Heart left ventricle (tissue), 16 donors: ENCODE measurements at regions of chr5 and their contacts with region 1.

Region 1: DNA sequence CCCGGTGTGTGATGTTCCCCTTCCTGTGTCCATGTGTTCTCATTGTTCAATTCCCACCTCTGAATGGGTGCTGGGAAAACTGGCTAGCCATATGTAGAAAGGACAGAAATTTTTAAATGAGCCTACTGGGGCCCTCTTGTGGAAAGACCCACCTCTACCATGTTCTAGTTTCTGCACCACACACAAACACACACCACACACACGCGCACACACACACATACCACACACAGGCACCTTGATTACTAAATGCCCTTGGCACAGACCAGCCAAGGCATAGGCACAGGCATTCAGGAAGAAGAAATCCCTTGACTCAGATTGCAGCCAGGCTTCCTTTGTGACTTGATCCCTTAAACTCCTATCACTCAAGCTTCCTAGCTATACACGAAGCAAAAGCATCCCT is 60.5 kb downstream of the SIL1 start:
- DNase-seq: no peak
- ATAC-seq: peak; percentile 11 to 47 (median 22)
- H3K4me3 ChIP-seq: no peak overlapping the region
- H3K27ac ChIP-seq: peak overlapping the region in 4 of 12 donors; percentile 70 to 77 (median 72)
- H3K4me1 ChIP-seq: peaks cover 17 to 67% (median 55%) of the 10 kb centered on the region in 12 donors
- H3K27me3 ChIP-seq: no peaks in the 10 kb centered on the region
- CTCF ChIP-seq: peak in 7 of 12 donors; percentile 12 to 39 (median 26)
- POLR2A ChIP-seq: no peak

Region 2: GRCh38 chr5:139104577-139105276 is 33.0 kb before region 1 on chr5:
- intact Hi-C with region 1: loop called in 1 of 10 experiments (anchors 5 kb)
- DNase-seq: peak in 4 of 5 donors; percentile 64 to 70 (median 66)
- ATAC-seq: peak; percentile 57 to 95 (median 94)
- H3K4me3 ChIP-seq: peak overlapping the region in 2 of 12 donors; percentile 11 to 23
- H3K27ac ChIP-seq: peak overlapping the region in 9 of 12 donors; percentile 6 to 83 (median 46)
- H3K4me1 ChIP-seq: peaks cover 0 to 41% (median 11%) of the 10 kb centered on the region in 12 donors
- H3K27me3 ChIP-seq: no peaks in the 10 kb centered on the region
- CTCF ChIP-seq: no peak
- POLR2A ChIP-seq: no peak

Region 3: DNA sequence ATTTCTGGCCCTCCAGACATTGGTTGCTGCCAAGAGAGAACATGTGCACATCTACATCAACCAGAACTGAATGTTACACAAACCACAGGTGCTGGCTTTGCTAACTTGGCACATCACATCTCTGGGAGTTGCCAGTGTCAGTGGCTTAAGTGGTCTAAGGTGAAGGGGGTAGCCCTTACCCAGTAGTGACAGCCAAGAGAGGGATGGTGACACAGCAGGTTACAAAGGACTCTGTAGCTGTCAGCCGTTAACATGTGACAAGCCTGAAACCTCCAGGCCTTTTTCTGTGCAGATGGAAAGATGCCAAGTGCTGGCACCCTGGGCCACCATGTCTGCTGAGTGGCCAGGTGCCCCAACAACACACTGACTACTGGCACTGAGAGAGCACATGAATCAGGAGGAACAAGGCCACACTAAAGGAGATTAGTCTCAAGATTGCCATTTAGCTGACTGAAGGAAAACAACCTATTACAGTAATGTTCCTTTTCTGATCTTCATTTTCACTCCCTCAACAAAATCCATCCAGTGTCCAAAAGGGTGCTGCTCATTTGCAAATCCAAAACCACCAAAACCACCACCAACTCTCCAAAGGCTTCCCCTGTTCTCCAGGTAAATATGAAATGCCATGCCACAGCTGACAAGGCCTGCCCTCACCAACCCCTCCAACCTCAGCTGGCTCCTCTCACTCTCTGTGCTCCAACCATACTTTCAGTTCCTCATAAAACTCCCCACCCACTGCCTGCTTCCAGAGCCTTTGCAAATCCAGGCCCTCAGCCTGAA is 40.3 kb after region 1 on chr5:
- intact Hi-C with region 1: loop called in 1 of 10 experiments (anchors 5 kb)
- DNase-seq: peak; percentile 55 to 78 (median 71)
- ATAC-seq: peak; percentile 93 to 97 (median 96)
- H3K4me3 ChIP-seq: no peak overlapping the region
- H3K27ac ChIP-seq: peak overlapping the region; percentile 10 to 85 (median 76)
- H3K4me1 ChIP-seq: peaks cover 0 to 60% (median 43%) of the 10 kb centered on the region in 12 donors
- H3K27me3 ChIP-seq: no peaks in the 10 kb centered on the region
- CTCF ChIP-seq: no peak
- POLR2A ChIP-seq: no peak

Region 4: DNA sequence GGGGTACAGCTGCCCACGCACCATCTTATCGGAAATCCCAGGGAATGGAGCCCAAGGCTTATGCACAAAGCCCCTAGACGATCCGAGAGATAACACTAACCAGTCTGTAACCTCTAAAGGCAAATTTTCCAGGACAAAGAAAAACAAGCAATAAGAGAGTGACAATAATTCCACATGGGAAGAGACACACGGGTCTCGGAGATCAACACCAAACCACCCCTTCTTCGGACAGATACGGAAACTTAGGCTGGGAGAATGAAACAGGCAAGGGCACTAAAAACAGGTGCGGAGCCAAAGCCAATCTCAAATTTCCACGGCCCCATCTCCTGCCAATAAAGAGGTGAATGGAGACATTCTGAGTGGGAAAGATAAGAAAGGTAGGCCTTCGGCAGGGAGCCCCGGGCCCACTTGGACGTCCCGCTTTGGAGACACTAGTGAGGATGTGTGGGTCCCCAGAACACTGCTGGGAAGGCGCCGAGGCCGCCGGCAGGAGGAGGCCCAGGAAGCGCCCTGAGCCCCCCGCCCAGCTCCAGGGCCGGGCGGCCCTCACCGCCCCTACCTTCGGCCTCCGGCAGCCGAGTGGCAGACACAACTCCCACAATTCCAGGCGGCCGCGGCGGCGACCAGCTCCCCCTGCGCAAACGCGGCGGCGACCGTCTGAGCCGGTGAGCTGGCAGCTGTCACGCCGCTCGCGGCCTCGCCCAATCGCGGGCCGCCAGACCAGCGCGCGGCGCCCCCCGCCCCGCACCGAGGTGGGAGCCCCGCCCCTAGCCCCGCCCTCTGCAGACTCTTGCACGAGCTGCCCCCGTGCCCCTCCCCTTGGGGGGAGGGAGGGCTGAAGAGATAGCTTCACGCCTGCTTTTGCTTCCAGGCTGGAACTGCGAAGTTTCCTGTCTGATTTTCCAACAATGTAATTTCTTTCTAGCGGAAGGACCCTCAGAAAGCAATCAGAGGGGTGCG is 60.3 kb after region 1 on chr5 and contains the start of gene SIL1:
- intact Hi-C with region 1: loop called in 1 of 10 experiments (anchors 10 kb)
- DNase-seq: peak; percentile 97 to 99 (median 97)
- ATAC-seq: peak; percentile 97 to 99 (median 98)
- H3K4me3 ChIP-seq: peak within 1 kb of the TSS; percentile 53 to 96 (median 72)
- H3K27ac ChIP-seq: peak within 1 kb of the TSS; percentile 62 to 98 (median 92)
- H3K4me1 ChIP-seq: peaks cover 0 to 35% (median 14%) of the 10 kb centered on the region in 12 donors
- H3K27me3 ChIP-seq: no peaks in the 10 kb centered on the region
- CTCF ChIP-seq: no peak
- POLR2A ChIP-seq: peak; percentile 58 to 95
- total RNA-seq, gene SIL1: 33.8 to 341 (median 39.8) TPM